Activated T-helper 2 cell treated with anti-CD3 and anti-CD28 coated beads, Interferon-gamma antibody, Interleukin-2, Interleukin-4, amounts not matched to agents 10 μg/mL and 5 μg/mL and 100 μg/mL, durations not matched to agents 14 hours and 24 hours and 36 hours (primary cell): ENCODE measurements at regions of chr19 and their contacts with region 1.

Region 1: DNA sequence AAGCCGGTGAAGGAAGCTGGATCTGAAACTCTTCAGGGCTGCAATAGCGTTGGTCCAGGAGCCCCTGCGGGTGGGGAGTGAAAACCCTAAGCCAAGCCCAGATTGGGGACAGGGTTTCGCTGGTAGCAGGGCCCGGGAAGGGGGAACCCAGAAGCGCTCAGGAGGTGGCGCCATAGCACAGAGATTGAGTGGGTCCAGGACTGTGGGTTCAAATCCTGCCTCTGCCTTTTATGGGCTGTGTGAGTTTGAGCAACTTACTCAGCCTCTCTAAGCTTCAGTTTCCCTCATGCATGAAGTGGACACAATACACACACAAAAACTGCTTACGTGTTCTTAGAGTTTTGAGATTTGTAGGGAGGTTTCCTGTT is 8.3 kb upstream of the SYCN start:
- DNase-seq: peak; percentile 50
- H3K4me3 Mint-ChIP-seq: no peak overlapping the region
- H3K27ac Mint-ChIP-seq: no peak overlapping the region
- H3K4me1 Mint-ChIP-seq: no peaks in the 10 kb centered on the region
- H3K27me3 Mint-ChIP-seq: peaks cover 4% of the 10 kb centered on the region

Region 2: GRCh38 chr19:39125554-39126311 is 86.6 kb before region 1 on chr19 and contains the start of gene PAK4:
- intact Hi-C with region 1: no loop called
- DNase-seq: peak; percentile 95
- H3K4me3 Mint-ChIP-seq: peak within 1 kb of the TSS; percentile 90
- H3K27ac Mint-ChIP-seq: peak within 1 kb of the TSS; percentile 91
- H3K4me1 Mint-ChIP-seq: peaks cover 28% of the 10 kb centered on the region
- H3K27me3 Mint-ChIP-seq: peaks cover 3% of the 10 kb centered on the region
- total RNA-seq, gene PAK4: 16.5 and 19.4 TPM in 2 replicates

Region 3: GRCh38 chr19:39183104-39183503 is 29.3 kb before region 1 on chr19:
- intact Hi-C with region 1: no loop called
- DNase-seq: no peak
- H3K4me3 Mint-ChIP-seq: no peak overlapping the region
- H3K27ac Mint-ChIP-seq: no peak overlapping the region
- H3K4me1 Mint-ChIP-seq: no peaks in the 10 kb centered on the region
- H3K27me3 Mint-ChIP-seq: no peaks in the 10 kb centered on the region

Region 4: DNA sequence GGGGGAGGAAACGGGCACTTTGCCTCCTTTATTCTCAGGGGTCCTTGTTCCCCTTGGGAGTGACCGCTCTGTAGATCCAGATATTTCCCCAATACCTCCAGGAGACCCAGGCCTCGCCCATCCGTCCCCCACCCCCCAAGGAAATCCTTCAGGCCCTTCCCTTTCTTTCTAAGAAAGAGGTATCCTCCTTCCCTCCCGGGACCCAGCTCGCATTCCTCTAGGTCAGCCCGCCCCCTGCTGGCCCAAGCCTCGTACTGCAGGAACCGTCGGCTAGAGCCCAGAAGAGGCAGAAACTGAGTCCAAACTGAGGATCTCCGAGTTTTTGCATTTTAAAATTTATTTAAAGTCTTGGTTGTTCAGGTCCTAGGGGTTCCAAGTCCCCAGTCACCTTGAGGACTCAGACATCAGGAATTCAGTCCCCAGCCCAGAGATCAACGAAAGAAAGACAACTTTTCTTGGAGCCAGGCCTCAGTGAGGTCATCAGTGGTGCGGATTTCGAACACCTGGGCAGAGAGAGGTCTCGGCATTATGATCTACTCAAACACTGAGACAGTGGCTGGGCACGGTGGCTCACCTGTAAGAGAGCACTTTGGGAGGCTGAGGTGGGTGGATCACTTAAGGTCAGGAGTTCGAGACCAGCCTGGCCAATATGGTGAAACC is 115.8 kb after region 1 on chr19:
- intact Hi-C with region 1: loop called (anchors 1 kb)
- DNase-seq: peak; percentile 64
- H3K4me3 Mint-ChIP-seq: no peak overlapping the region
- H3K27ac Mint-ChIP-seq: peak overlapping the region; percentile 65
- H3K4me1 Mint-ChIP-seq: peaks cover 21% of the 10 kb centered on the region
- H3K27me3 Mint-ChIP-seq: no peaks in the 10 kb centered on the region

Region 5: GRCh38 chr19:39406656-39407393 is 194.5 kb after region 1 on chr19 and contains the start of gene ZFP36:
- intact Hi-C with region 1: loop called (anchors 1 kb)
- DNase-seq: peak; percentile 82
- H3K4me3 Mint-ChIP-seq: peak within 1 kb of the TSS; percentile 97
- H3K27ac Mint-ChIP-seq: peak within 1 kb of the TSS; percentile 88
- H3K4me1 Mint-ChIP-seq: peaks cover 51% of the 10 kb centered on the region
- H3K27me3 Mint-ChIP-seq: no peaks in the 10 kb centered on the region
- total RNA-seq, gene ZFP36: 45.4 and 46.9 TPM in 2 replicates